ENCODE measurements at regions of chr1 and their contacts with region 1.

Region 1: DNA sequence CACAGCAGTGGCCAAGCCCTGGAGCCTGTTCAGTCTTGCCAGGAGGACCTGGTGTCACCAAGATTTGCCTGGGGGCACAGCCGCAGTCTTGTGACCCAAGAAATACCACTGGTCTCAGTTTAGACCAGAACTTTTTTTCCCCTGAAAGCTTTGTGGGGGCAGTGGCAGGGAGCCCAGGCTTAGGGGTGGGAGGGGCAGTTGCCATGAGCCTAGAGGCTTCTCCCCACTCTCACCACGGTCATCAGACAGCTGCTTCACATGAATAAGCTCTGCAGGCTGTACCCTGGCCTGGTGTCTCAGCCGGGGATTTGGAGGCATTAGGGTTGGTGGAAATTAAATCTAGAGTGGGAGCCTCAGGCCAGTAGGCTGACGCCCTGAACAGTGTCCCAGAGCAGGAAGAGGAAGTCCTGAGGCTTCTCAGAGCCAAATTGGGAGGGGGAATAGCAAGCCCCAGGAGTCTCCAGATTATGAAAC is 73.7 kb downstream of the SLC16A1 start:
- H3K4me3 ChIP-seq: no peak overlapping the region
- H3K27ac ChIP-seq: no peak overlapping the region
- H3K4me1 ChIP-seq: peaks cover 3% of the 10 kb centered on the region; the same call in 1 of the 2 replicates
- CTCF ChIP-seq: no peak

Region 2: GRCh38 chr1:112904071-112904830 is 21.9 kb after region 1 on chr1:
- CTCF ChIA-PET with region 1: interaction called, 8 read pairs
- POLR2A ChIA-PET with region 1: interaction called, 12 read pairs
- H3K4me3 ChIP-seq: no peak overlapping the region
- H3K27ac ChIP-seq: no peak overlapping the region
- H3K4me1 ChIP-seq: no peaks in the 10 kb centered on the region
- CTCF ChIP-seq: no peak

Measured in HEK293 (cell line).